Dorsolateral prefrontal cortex (tissue), 120 donors: ENCODE measurements at regions of chr18 and their contacts with region 1.

Region 1: GRCh38 chr18:13566941-13567746 is 159.2 kb downstream of the FAM210A start:
- DNase-seq: peak in 9 of 10 donors; percentile 56 to 86 (median 78)
- H3K4me3 ChIP-seq: peak overlapping the region in 2 of 59 donors; percentile 6 to 22
- H3K27ac ChIP-seq: peak overlapping the region; percentile 21 to 100 (median 98)
- H3K27me3 ChIP-seq: no peaks in the 10 kb centered on the region
- CTCF ChIP-seq: peak in 2 of 56 donors; percentile 5 to 8

Region 2: DNA sequence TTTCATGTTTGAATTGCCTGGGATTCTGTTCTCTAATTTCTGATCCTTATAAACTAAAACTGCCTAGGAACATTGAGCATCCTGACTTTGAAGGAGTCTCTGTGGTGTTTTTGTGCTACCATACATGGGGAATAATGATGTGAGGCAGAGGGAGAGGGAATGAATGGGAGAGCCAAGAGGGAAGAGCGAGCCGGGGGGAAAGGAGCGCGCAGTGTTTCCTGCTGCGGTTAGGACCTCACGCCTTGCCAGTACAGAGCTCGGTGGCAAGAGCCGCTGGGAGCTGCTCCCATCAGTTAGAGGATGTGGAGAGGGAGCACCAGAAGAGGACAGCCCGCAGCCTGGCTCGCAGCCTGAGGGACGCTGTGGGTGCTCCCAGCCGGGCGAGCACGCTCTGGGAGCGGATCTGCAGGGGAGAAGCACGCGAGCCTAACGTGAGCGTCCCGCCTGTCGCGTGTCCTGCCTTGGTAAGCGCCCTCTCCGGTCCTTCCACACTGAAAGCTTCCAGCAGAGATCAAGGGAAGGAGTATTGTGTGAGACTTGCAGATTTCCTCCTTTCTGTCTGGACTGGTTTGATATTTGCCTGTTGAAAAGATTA is 44.6 kb after region 1 on chr18:
- intact Hi-C with region 1: loop called (anchors 1 kb)
- DNase-seq: peak in 8 of 10 donors; percentile 57 to 77 (median 74)
- H3K4me3 ChIP-seq: peak overlapping the region; percentile 39 to 78 (median 63)
- H3K27ac ChIP-seq: peak overlapping the region; percentile 81 to 99 (median 96)
- H3K27me3 ChIP-seq: no peaks in the 10 kb centered on the region
- CTCF ChIP-seq: peak in 5 of 56 donors; percentile 3 to 14 (median 6)

Region 3: GRCh38 chr18:13989199-13989598 is 422.1 kb after region 1 on chr18:
- intact Hi-C with region 1: loop called in 1 of 2 experiments (anchors 10 kb)
- DNase-seq: no peak
- H3K4me3 ChIP-seq: no peak overlapping the region
- H3K27ac ChIP-seq: no peak overlapping the region
- H3K27me3 ChIP-seq: peaks cover 0 to 3% (median 0%) of the 10 kb centered on the region in 45 donors
- CTCF ChIP-seq: no peak